GM12878 (cell line): ENCODE measurements at regions of chr5 and their contacts with region 1.

Region 1: GRCh38 chr5:87400305-87400899 is 12.3 kb downstream of the CCNH start:
- DNase-seq: no peak
- ATAC-seq: peak; percentile 84
- H3K4me3 ChIP-seq: no peak overlapping the region
- H3K27ac ChIP-seq: no peak overlapping the region
- H3K4me1 ChIP-seq: no peaks in the 10 kb centered on the region
- H3K27me3 ChIP-seq: no peaks in the 10 kb centered on the region
- CTCF ChIP-seq: peak; percentile 39 to 64 (median 41); a peak in 4 of 6 replicates
- EP300 ChIP-seq: no peak
- POLR2A ChIP-seq: no peak
- RAD21 ChIP-seq: peak; percentile 80

Region 2: GRCh38 chr5:86880785-86881492 is 519.5 kb before region 1 on chr5:
- CTCF ChIA-PET with region 1: interaction called, 7 read pairs
- POLR2A ChIA-PET with region 1: no interaction called
- RAD21 ChIA-PET with region 1: interaction called, 6 read pairs
- SMC1A ChIA-PET with region 1: interaction called, 4 read pairs
- in situ Hi-C with region 1: no loop called
- intact Hi-C with region 1: loop called (anchors 10 kb)
- DNase-seq: peak; percentile 12
- ATAC-seq: peak; percentile 97
- H3K4me3 ChIP-seq: no peak overlapping the region
- H3K27ac ChIP-seq: no peak overlapping the region
- H3K4me1 ChIP-seq: no peaks in the 10 kb centered on the region
- H3K27me3 ChIP-seq: no peaks in the 10 kb centered on the region
- CTCF ChIP-seq: peak; percentile 63 to 77 (median 64)
- EP300 ChIP-seq: no peak
- POLR2A ChIP-seq: no peak
- RAD21 ChIP-seq: peak; percentile 72

Region 3: DNA sequence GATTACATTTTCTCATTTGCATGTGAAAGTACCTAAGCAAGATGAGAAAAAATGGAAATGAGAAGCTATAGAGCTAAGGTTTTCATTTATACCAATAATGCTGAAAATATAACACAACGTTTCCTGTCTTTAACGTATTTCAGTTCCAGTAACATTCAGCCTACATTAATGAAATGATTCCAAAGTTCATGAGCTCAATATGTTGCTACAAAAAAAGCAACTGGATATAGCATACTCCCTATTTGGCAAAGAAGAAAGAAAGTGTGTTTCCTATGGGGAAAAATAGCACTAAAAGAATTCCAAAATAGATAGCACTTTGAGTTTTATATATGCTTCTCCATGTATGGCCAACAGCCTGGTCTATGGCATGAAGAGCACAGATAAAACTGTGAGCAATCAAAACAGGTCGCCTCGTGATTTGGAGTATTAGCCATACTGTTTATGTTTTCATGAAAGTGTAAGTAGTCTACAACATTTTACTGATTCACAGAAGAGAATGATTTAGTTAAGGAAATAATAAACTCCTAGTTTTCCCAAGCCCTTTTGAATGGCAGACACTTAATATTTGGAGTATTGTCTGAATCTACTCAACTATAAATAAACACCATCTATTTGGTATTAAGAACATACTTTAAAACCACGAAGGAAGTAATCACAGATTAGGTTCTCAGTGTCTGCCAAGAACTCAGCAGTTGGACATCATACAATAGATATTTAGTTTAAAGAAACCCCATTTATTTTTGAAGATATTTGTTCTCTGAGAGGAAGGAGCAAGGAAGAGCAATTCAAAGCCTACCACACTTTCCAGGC is 391.4 kb before region 1 on chr5:
- CTCF ChIA-PET with region 1: interaction called, 29 read pairs
- POLR2A ChIA-PET with region 1: interaction called, 4 read pairs
- RAD21 ChIA-PET with region 1: interaction called, 10 read pairs
- SMC1A ChIA-PET with region 1: interaction called, 4 read pairs
- in situ Hi-C with region 1: no loop called
- intact Hi-C with region 1: no loop called
- DNase-seq: no peak
- ATAC-seq: no peak
- H3K4me3 ChIP-seq: no peak overlapping the region
- H3K27ac ChIP-seq: no peak overlapping the region
- H3K4me1 ChIP-seq: no peaks in the 10 kb centered on the region
- H3K27me3 ChIP-seq: no peaks in the 10 kb centered on the region
- CTCF ChIP-seq: no peak
- EP300 ChIP-seq: no peak
- POLR2A ChIP-seq: no peak
- RAD21 ChIP-seq: no peak

Region 4: GRCh38 chr5:87020099-87020934 is 380.1 kb before region 1 on chr5:
- CTCF ChIA-PET with region 1: interaction called, 22 read pairs
- POLR2A ChIA-PET with region 1: no interaction called
- RAD21 ChIA-PET with region 1: interaction called, 5 read pairs
- SMC1A ChIA-PET with region 1: interaction called, 7 read pairs
- in situ Hi-C with region 1: no loop called
- intact Hi-C with region 1: loop called (anchors 5 kb)
- DNase-seq: peak; percentile 47
- ATAC-seq: peak; percentile 94
- H3K4me3 ChIP-seq: peak overlapping the region; percentile 31; the same call in 1 of the 2 replicates
- H3K27ac ChIP-seq: peak overlapping the region; percentile 67
- H3K4me1 ChIP-seq: peaks cover 11% of the 10 kb centered on the region
- H3K27me3 ChIP-seq: no peaks in the 10 kb centered on the region
- CTCF ChIP-seq: no peak
- EP300 ChIP-seq: no peak
- POLR2A ChIP-seq: peak; percentile 53
- RAD21 ChIP-seq: no peak

Region 5: GRCh38 chr5:87267574-87268125 is 132.8 kb before region 1 on chr5 and contains the start of gene RASA1:
- CTCF ChIA-PET with region 1: interaction called, 6 read pairs
- POLR2A ChIA-PET with region 1: no interaction called
- RAD21 ChIA-PET with region 1: interaction called, 4 read pairs
- SMC1A ChIA-PET with region 1: no interaction called
- in situ Hi-C with region 1: no loop called
- intact Hi-C with region 1: loop called (anchors 5 kb)
- DNase-seq: peak; percentile 76
- ATAC-seq: peak; percentile 74
- H3K4me3 ChIP-seq: peak within 1 kb of the TSS; percentile 98
- H3K27ac ChIP-seq: peak within 1 kb of the TSS; percentile 94
- H3K4me1 ChIP-seq: no peaks in the 10 kb centered on the region
- H3K27me3 ChIP-seq: no peaks in the 10 kb centered on the region
- CTCF ChIP-seq: no peak
- EP300 ChIP-seq: no peak
- POLR2A ChIP-seq: peak; percentile 91
- RAD21 ChIP-seq: peak; percentile 30
- polyA plus RNA-seq, gene RASA1: 7.8 to 12.0 TPM

Region 6: GRCh38 chr5:87383216-87383615 is 17.2 kb before region 1 on chr5:
- CTCF ChIA-PET with region 1: interaction called, 11 read pairs
- POLR2A ChIA-PET with region 1: interaction called, 4 read pairs
- RAD21 ChIA-PET with region 1: interaction called, 6 read pairs
- SMC1A ChIA-PET with region 1: interaction called, 14 read pairs
- in situ Hi-C with region 1: no loop called
- intact Hi-C with region 1: no loop called
- DNase-seq: no peak
- ATAC-seq: no peak
- H3K4me3 ChIP-seq: no peak overlapping the region
- H3K27ac ChIP-seq: no peak overlapping the region
- H3K4me1 ChIP-seq: no peaks in the 10 kb centered on the region
- H3K27me3 ChIP-seq: no peaks in the 10 kb centered on the region
- CTCF ChIP-seq: no peak
- EP300 ChIP-seq: no peak
- POLR2A ChIP-seq: no peak
- RAD21 ChIP-seq: no peak

Region 7: GRCh38 chr5:87412630-87413342 is 12.4 kb after region 1 on chr5 and contains the start of gene CCNH:
- CTCF ChIA-PET with region 1: interaction called, 45 read pairs
- POLR2A ChIA-PET with region 1: interaction called, 5 read pairs
- RAD21 ChIA-PET with region 1: interaction called, 17 read pairs
- SMC1A ChIA-PET with region 1: interaction called, 18 read pairs
- in situ Hi-C with region 1: no loop called
- intact Hi-C with region 1: no loop called
- DNase-seq: peak; percentile 93
- ATAC-seq: peak; percentile 95
- H3K4me3 ChIP-seq: peak within 1 kb of the TSS; percentile 93
- H3K27ac ChIP-seq: peak within 1 kb of the TSS; percentile 95
- H3K4me1 ChIP-seq: peaks cover 3% of the 10 kb centered on the region; the same call in 1 of the 2 replicates
- H3K27me3 ChIP-seq: no peaks in the 10 kb centered on the region
- CTCF ChIP-seq: no peak
- EP300 ChIP-seq: no peak
- POLR2A ChIP-seq: peak; percentile 97
- RAD21 ChIP-seq: no peak
- polyA plus RNA-seq, gene CCNH: 110 to 116 TPM